AG04449 (cell line): ENCODE measurements at regions of chr4 and their contacts with region 1.

Region 1: DNA sequence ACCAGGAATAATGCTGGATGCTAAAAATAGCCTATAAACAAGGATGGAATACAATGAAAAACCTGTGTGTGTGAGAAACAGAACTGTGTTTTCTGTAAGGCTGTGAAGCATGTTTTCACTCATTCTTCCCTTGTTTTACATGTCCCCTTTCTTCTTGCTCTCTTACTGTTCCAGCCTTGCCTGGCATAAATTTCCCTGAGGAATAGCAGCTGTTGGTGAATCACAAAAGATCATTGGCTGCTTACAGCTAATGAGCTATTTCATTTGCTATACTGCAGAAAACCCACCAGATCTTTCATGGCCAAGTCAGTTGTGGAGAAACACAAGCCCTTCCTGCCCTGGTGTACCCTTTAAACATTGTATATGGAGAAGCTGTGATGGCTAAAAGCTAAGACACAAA is 91.1 kb downstream of the LDB2 start:
- DNase-seq: no peak
- H3K4me3 ChIP-seq: no peak overlapping the region
- CTCF ChIP-seq: no peak

Region 2: DNA sequence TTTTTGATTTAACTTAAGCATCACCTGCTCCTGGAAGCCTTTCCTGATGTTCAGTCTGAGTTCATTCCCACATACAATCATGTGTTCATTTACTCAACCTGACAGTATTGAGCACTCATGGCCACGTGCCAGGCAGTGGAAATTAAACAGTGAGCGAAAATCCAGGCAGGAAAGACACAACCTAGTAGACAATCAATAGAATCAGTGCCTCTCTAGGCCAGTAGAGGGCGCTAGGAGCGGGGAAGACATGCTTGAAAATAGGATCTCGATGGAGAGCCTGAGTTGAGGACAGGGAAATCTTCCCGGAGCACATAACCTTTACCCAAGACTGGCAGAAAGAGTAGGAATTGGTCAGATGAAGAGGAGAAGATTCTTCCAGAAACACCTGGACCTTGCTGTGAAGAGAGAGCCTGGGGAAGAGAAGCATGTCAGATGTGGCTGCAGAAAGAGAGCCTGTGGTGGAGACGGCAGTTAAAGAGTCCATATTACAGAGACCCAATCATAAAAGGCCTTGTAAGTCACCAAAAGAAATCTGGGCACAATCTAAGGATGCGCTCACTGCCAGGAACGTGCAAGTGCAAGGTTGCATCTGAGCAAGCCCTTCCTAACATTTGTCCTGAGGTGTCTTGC is 12.4 kb before region 1 on chr4:
- CTCF ChIA-PET with region 1: interaction called, 47 read pairs
- POLR2A ChIA-PET with region 1: no interaction called
- DNase-seq: no peak
- H3K4me3 ChIP-seq: no peak overlapping the region
- CTCF ChIP-seq: peak; percentile 79

Region 3: DNA sequence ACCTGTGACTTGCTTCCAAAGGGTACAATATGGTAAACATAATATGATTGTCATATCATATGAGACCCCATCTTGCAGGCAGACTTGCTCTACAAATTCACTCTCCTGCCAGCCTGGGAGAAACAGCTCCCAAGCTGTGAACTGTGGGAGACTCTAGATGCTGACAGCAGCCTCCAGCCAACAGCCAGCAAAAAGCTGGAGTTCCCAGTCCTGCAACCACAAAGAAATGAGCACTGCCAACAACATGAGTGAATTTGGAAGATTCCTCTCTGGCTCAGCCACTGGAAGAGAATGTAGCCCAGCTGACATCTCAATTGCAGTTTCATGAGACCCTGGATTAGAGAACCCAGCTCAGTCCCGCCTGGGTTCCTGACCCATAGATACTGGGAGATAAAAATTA is 559.1 kb after region 1 on chr4:
- CTCF ChIA-PET with region 1: no interaction called
- POLR2A ChIA-PET with region 1: no interaction called
- DNase-seq: no peak
- H3K4me3 ChIP-seq: no peak overlapping the region
- CTCF ChIP-seq: no peak